Spleen (tissue), 13 donors: ENCODE measurements at regions of chr5 and their contacts with region 1.

Region 1: DNA sequence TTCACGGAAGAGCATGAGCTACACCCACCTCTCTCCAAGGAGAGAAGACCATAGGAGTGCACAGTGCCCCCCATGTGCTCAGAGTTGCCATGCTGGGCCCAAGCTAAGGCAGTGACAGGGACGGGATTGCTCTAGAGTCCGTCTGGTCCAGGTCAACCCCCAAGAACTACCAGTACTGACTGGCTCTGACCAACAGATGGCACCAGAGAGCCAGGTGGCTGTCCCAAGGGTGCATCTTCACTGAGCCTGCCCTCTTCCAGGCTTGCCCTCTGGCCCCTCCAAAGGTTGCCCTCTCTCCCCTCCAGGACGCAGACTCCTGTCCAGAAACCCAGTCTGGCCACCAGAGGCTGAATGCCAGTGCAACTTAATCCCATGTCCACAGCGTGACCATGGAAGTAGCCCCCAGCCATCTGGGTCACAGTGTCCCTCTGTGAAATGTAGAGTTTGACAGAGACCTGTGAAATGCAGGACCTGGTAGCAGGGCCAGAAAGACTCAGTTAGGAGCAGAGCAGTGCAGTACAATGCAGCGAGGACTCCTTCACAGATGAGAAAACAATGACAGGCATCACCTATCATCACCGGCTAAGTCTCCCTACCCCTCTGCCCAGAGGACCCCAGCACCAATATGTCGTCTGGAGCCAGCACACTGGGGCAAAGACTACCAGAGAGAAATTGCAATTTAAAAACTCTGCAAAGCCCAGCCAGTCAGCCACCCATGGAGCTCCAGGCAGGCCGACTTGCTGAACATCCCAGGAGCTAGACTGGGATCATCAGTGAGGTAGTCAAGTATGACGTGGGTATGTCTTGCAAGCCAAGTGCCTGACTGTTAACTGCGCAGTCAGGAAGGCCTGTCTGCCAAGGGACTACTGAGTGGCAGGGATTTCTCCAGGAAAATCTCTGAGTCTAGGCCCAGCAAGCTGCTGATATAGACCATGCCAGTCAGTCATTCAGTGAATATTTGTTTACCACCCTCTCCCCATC is 7.7 kb upstream of the SKP1 start:
- DNase-seq: peak; percentile 89
- H3K4me3 ChIP-seq: no peak overlapping the region
- H3K27ac ChIP-seq: no peak overlapping the region
- H3K4me1 ChIP-seq: peaks cover 0 to 13% (median 0%) of the 10 kb centered on the region in 6 donors
- H3K27me3 ChIP-seq: no peaks in the 10 kb centered on the region
- CTCF ChIP-seq: peak; percentile 56 to 94 (median 86)
- POLR2A ChIP-seq: no peak

Region 2: DNA sequence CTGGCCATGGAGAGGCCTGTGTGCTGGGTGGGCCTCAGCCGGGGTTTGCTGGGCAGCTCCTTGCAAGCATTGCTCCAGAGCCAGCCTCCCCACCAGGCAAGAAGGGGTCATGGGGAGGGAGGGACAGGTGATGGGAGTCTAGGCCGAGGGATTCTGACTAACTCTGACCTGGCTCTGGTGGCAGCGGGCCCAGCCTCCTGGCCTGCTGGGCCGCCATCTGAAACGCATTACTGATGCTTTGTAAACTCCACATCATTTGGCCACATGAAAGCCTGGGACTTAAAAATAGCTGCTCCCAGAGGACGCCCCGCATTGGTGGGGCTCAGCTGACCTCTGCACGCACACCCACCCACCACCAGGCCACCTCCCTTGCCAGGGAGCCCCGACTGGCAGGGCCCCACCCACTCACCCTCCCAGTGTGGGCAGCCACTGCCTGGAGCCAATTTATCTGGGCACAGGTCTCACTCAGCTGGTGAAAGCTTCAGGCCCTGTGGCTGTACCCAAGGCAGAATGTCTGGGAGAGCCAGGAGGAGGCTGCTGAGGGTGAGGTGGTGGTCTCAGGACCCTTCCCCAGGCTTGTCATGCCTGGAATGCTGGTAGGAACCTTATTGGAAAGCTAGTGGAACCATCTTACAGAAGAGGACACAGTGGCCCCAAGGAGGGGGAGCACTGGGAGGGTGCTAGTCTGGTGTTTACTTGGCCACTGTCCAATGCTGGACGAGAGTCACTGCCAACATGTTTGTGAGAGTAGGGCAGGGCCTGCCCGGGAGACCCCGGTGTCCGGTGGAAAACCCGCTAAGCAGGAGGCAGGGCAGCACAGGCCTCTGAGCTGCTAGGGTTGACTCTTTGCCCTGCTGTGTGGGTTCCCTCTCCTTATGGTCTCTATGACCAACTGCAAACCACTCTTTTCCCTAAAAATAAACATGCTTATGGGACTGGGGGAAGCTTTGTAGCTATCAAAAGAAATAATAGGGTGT is 59.1 kb before region 1 on chr5:
- intact Hi-C with region 1: no loop called
- DNase-seq: no peak
- H3K4me3 ChIP-seq: peak overlapping the region in 2 of 8 donors; percentile 16 to 51
- H3K27ac ChIP-seq: peak overlapping the region in 7 of 8 donors; percentile 44 to 88 (median 78)
- H3K4me1 ChIP-seq: peaks cover 24 to 100% (median 90%) of the 10 kb centered on the region in 6 donors
- H3K27me3 ChIP-seq: no peaks in the 10 kb centered on the region
- CTCF ChIP-seq: no peak
- POLR2A ChIP-seq: no peak

Region 3: DNA sequence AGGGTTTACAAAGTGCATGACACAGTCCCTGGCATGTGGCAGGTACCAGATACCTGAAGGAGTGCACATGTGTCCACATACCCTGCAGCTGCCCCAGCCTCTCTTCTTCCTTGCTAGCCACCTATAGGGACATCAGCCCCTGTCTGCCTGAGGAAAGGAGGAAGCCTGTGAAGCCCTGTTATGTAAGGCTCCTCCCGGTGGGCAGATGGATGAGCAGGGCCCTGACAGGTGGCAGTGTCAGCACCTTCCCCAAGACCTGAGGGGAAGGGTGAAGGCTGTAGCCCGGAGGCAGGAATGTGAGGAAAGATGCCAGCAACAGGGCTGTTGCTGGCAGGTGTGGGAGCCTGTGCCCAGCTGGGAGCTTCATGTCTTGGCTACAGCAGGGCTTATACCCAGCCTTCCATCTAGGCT is 48.2 kb before region 1 on chr5:
- intact Hi-C with region 1: no loop called
- DNase-seq: peak; percentile 59
- H3K4me3 ChIP-seq: no peak overlapping the region
- H3K27ac ChIP-seq: peak overlapping the region in 5 of 8 donors; percentile 4 to 88 (median 20)
- H3K4me1 ChIP-seq: peaks cover 30 to 100% (median 93%) of the 10 kb centered on the region in 6 donors
- H3K27me3 ChIP-seq: no peaks in the 10 kb centered on the region
- CTCF ChIP-seq: no peak
- POLR2A ChIP-seq: no peak

Region 4: DNA sequence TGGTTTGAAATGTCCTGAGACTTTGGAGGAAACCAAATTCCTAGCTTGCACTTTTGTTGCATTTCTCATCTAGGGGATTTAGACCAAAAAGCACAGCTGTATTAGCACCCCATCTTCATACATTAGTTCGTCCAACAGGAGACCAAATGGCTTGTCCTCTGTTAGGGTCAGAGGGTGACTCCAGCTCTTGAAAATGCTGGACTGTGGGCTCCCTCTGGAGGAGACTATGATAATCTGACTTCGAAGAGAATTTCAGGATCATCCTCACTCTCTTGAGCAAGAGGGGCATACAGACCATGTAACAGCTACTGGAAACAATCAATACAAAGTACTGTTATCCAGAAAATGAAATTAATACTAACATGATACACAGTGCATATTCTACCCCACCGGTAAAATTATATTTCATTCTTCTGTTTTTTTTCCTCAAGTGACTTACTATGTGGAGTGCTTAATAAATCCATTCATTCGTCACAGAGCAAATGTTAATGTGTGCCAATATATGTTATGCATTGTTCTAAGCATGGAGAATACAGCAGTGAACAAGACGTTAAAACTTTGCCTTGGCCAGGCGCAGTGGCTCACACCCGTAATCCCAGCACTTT is 105.2 kb after region 1 on chr5:
- intact Hi-C with region 1: loop called (anchors 2 kb)
- DNase-seq: no peak
- H3K4me3 ChIP-seq: no peak overlapping the region
- H3K27ac ChIP-seq: no peak overlapping the region
- H3K4me1 ChIP-seq: no peaks in the 10 kb centered on the region
- H3K27me3 ChIP-seq: no peaks in the 10 kb centered on the region
- CTCF ChIP-seq: peak in 9 of 11 experiments; percentile 26 to 82 (median 61)
- POLR2A ChIP-seq: no peak

Region 5: DNA sequence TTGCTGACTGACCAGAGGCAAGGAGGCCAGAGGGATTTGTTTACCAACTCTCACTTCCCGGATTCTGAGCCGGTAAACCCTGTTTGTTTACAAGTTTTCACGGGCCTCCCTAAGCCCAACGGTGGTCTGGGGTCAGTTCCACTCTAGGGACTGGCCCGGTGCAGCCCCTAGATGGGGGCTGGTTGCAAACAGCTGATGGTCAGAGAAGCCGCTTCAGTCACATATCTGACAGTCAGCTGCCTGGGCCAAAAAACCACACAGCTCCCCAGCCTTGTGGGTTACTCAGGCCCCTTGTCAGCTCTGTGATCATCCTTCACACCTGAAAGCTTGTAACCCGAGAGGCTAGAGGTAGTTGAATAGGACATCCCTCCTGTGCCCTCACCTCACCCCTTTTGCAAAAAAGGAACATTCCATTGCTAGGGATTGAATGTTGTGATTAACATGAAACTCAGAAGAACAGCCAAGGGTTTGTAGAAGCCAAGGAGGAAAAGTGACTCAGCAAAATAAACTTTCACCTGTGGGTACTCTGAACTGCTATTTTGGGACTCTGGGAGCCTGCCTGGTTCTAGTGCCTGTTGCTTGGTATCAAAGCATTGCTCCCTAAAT is 407.8 kb after region 1 on chr5:
- intact Hi-C with region 1: loop called (anchors 10 kb)
- DNase-seq: no peak
- H3K4me3 ChIP-seq: no peak overlapping the region
- H3K27ac ChIP-seq: no peak overlapping the region
- H3K4me1 ChIP-seq: peaks cover 0 to 4% (median under 1%) of the 10 kb centered on the region in 6 donors
- H3K27me3 ChIP-seq: no peaks in the 10 kb centered on the region
- CTCF ChIP-seq: no peak
- POLR2A ChIP-seq: no peak